Left colon (tissue), 2 donors: ENCODE measurements at regions of chr2 and their contacts with region 1.

Region 1: GRCh38 chr2:105369747-105370690 is 28.8 kb downstream of the FHL2 start:
- DNase-seq: peak; percentile 86 to 93
- ATAC-seq: peak; percentile 93

Region 2: GRCh38 chr2:105235388-105236054 is 134.5 kb before region 1 on chr2:
- intact Hi-C with region 1: no loop called
- DNase-seq: peak; percentile 56 to 92
- ATAC-seq: peak; percentile 86

Region 3: GRCh38 chr2:105521205-105521604 is 151.2 kb after region 1 on chr2:
- intact Hi-C with region 1: loop called (anchors 2 to 5 kb)
- DNase-seq: no peak
- ATAC-seq: no peak